Endothelial cell of umbilical vein (primary cell): ENCODE measurements at regions of chr5 and their contacts with region 1.

Region 1: GRCh38 chr5:137629646-137630045 is 106.2 kb downstream of the KLHL3 start:
- DNase-seq: peak; percentile 60
- H3K4me3 ChIP-seq: no peak overlapping the region
- H3K27ac ChIP-seq: no peak overlapping the region
- H3K4me1 ChIP-seq: peaks cover 3% of the 10 kb centered on the region
- H3K27me3 ChIP-seq: no peaks in the 10 kb centered on the region
- CTCF ChIP-seq: peak; percentile 62 to 76
- POLR2A ChIP-seq: no peak

Region 2: DNA sequence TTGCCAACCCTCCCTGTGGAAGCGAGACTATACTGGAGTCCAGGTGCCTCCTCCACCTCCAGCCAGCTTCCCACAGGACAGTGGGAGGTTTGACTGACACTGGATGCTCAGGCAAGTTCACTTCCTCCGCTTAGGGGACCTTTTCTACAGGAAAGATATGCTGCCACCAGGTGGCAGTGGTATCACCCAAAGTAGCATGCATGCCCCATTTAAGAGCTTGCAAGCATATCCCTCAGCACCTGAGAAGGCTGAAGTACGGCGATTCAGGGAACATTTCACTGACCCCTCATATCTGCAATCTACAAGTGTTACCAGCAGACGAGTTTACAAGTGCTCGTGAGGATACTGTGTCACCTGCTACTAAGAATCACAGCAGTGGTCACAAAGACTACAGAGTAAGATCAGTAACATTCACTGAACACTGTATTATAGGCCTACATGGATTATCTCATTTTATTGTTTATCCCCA is 30.7 kb after region 1 on chr5:
- CTCF ChIA-PET with region 1: interaction called, 121 read pairs
- POLR2A ChIA-PET with region 1: no interaction called
- dilution Hi-C with region 1: no loop called
- intact Hi-C with region 1: loop called (anchors 1 kb)
- DNase-seq: peak; percentile 90
- H3K4me3 ChIP-seq: no peak overlapping the region
- H3K27ac ChIP-seq: no peak overlapping the region
- H3K4me1 ChIP-seq: peaks cover 4% of the 10 kb centered on the region
- H3K27me3 ChIP-seq: no peaks in the 10 kb centered on the region
- CTCF ChIP-seq: peak; percentile 75 to 78
- POLR2A ChIP-seq: no peak

Region 3: GRCh38 chr5:137714946-137715345 is 85.3 kb after region 1 on chr5:
- CTCF ChIA-PET with region 1: interaction called, 11 read pairs
- POLR2A ChIA-PET with region 1: no interaction called
- dilution Hi-C with region 1: no loop called
- intact Hi-C with region 1: no loop called
- DNase-seq: peak; percentile 60
- H3K4me3 ChIP-seq: no peak overlapping the region
- H3K27ac ChIP-seq: no peak overlapping the region
- H3K4me1 ChIP-seq: no peaks in the 10 kb centered on the region
- H3K27me3 ChIP-seq: no peaks in the 10 kb centered on the region
- CTCF ChIP-seq: no peak
- POLR2A ChIP-seq: no peak

Region 4: GRCh38 chr5:137743031-137743640 is 113.5 kb after region 1 on chr5:
- CTCF ChIA-PET with region 1: interaction called, 375 read pairs
- POLR2A ChIA-PET with region 1: interaction called, 3 read pairs
- dilution Hi-C with region 1: no loop called
- intact Hi-C with region 1: loop called (anchors 1 kb)
- DNase-seq: peak; percentile 72
- H3K4me3 ChIP-seq: no peak overlapping the region
- H3K27ac ChIP-seq: no peak overlapping the region
- H3K4me1 ChIP-seq: no peaks in the 10 kb centered on the region
- H3K27me3 ChIP-seq: no peaks in the 10 kb centered on the region
- CTCF ChIP-seq: peak; percentile 65 to 67
- POLR2A ChIP-seq: no peak

Region 5: GRCh38 chr5:137989419-137989818 is 359.8 kb after region 1 on chr5:
- CTCF ChIA-PET with region 1: no interaction called
- POLR2A ChIA-PET with region 1: no interaction called
- dilution Hi-C with region 1: no loop called
- intact Hi-C with region 1: no loop called
- DNase-seq: no peak
- H3K4me3 ChIP-seq: no peak overlapping the region
- H3K27ac ChIP-seq: no peak overlapping the region
- H3K4me1 ChIP-seq: no peaks in the 10 kb centered on the region
- H3K27me3 ChIP-seq: no peaks in the 10 kb centered on the region
- CTCF ChIP-seq: no peak
- POLR2A ChIP-seq: no peak

Region 6: GRCh38 chr5:138035605-138036537 is 406.2 kb after region 1 on chr5:
- CTCF ChIA-PET with region 1: interaction called, 10 read pairs
- POLR2A ChIA-PET with region 1: no interaction called
- dilution Hi-C with region 1: no loop called
- intact Hi-C with region 1: loop called (anchors 10 kb)
- DNase-seq: peak; percentile 87
- H3K4me3 ChIP-seq: no peak overlapping the region
- H3K27ac ChIP-seq: no peak overlapping the region
- H3K4me1 ChIP-seq: peaks cover 10% of the 10 kb centered on the region
- H3K27me3 ChIP-seq: no peaks in the 10 kb centered on the region
- CTCF ChIP-seq: peak; percentile 74 to 84
- POLR2A ChIP-seq: no peak